Activated CD8-positive, alpha-beta T cell treated with anti-CD3 and anti-CD28 coated beads, Interleukin-2, amount 10 ng/mL, durations not matched to agents 7 days and 5 days (primary cell): ENCODE measurements at regions of chr10 and their contacts with region 1.

Region 1: GRCh38 chr10:14837757-14838581 is at the starts of genes CDNF, HSPA14 and MSANTD7:
- DNase-seq: peak; percentile 100
- ATAC-seq: peak; percentile 94
- H3K4me3 Mint-ChIP-seq: peak within 1 kb of the TSS; percentile 90
- H3K27ac Mint-ChIP-seq: peak within 1 kb of the TSS; percentile 96
- H3K4me1 Mint-ChIP-seq: peaks cover 24% of the 10 kb centered on the region
- H3K27me3 Mint-ChIP-seq: no peaks in the 10 kb centered on the region
- total RNA-seq, gene CDNF: 0.89 to 1.2 TPM
- total RNA-seq, gene HSPA14: 28.9 to 31.4 TPM
- total RNA-seq, gene MSANTD7: 21.8 to 22.5 TPM

Region 2: DNA sequence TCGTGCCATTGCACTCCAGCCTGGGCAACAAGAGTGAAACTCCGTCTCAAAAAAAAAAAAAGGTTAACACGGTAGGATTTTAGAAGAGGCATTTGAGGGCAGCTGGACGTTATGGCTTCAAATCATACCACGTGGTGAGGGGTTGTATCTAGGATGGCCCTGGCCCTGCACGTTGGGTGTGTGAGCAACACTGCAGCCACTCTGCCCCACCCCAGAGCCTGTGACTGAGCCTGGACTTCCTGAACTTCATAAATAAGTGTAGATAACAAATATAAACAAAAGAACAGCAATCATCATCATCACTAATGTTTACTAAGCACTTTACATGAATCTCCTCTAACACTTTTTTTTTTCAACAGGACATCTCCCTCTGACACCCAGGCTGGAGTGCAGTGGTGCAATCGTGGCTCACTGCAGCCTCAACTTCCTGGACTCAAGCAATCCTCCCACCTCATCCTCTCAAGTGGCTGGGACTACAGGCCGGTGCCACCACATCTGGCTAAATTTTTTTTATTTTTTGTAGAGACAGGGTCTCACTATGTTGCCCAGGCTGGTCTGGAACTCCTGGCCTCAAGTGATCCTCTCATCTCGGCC is 337.7 kb before region 1 on chr10:
- CTCF ChIA-PET with region 1: interaction called, 11 read pairs
- POLR2A ChIA-PET with region 1: interaction called, 3 read pairs
- DNase-seq: no peak
- ATAC-seq: no peak
- H3K4me3 Mint-ChIP-seq: no peak overlapping the region
- H3K27ac Mint-ChIP-seq: no peak overlapping the region
- H3K4me1 Mint-ChIP-seq: peaks cover 17% of the 10 kb centered on the region
- H3K27me3 Mint-ChIP-seq: peaks cover 13% of the 10 kb centered on the region

Region 3: GRCh38 chr10:14604181-14605142 is 233.5 kb before region 1 on chr10:
- CTCF ChIA-PET with region 1: no interaction called
- POLR2A ChIA-PET with region 1: interaction called, 22 read pairs
- DNase-seq: peak; percentile 75
- ATAC-seq: peak; percentile 73
- H3K4me3 Mint-ChIP-seq: peak overlapping the region; percentile 82
- H3K27ac Mint-ChIP-seq: peak overlapping the region; percentile 80
- H3K4me1 Mint-ChIP-seq: peaks cover 50% of the 10 kb centered on the region
- H3K27me3 Mint-ChIP-seq: no peaks in the 10 kb centered on the region

Region 4: GRCh38 chr10:14639637-14640036 is 198.3 kb before region 1 on chr10:
- CTCF ChIA-PET with region 1: no interaction called
- POLR2A ChIA-PET with region 1: no interaction called
- DNase-seq: no peak
- ATAC-seq: no peak
- H3K4me3 Mint-ChIP-seq: no peak overlapping the region
- H3K27ac Mint-ChIP-seq: no peak overlapping the region
- H3K4me1 Mint-ChIP-seq: no peaks in the 10 kb centered on the region
- H3K27me3 Mint-ChIP-seq: peaks cover 12% of the 10 kb centered on the region

Region 5: GRCh38 chr10:14812271-14812670 is 25.7 kb before region 1 on chr10:
- CTCF ChIA-PET with region 1: no interaction called
- POLR2A ChIA-PET with region 1: no interaction called
- DNase-seq: no peak
- ATAC-seq: no peak
- H3K4me3 Mint-ChIP-seq: no peak overlapping the region
- H3K27ac Mint-ChIP-seq: no peak overlapping the region
- H3K4me1 Mint-ChIP-seq: peaks cover 14% of the 10 kb centered on the region
- H3K27me3 Mint-ChIP-seq: peaks cover 2% of the 10 kb centered on the region

Region 6: GRCh38 chr10:14878266-14879054 is 40.5 kb after region 1 on chr10 and contains the start of gene SUV39H2:
- CTCF ChIA-PET with region 1: interaction called, 10 read pairs
- POLR2A ChIA-PET with region 1: interaction called, 24 read pairs
- DNase-seq: peak; percentile 96
- ATAC-seq: peak; percentile 92
- H3K4me3 Mint-ChIP-seq: peak within 1 kb of the TSS; percentile 94
- H3K27ac Mint-ChIP-seq: peak within 1 kb of the TSS; percentile 92
- H3K4me1 Mint-ChIP-seq: peaks cover 48% of the 10 kb centered on the region
- H3K27me3 Mint-ChIP-seq: no peaks in the 10 kb centered on the region
- total RNA-seq, gene SUV39H2: 34.3 to 34.6 TPM